ENCODE measurements at regions of chr10 and their contacts with region 1.

Region 1: GRCh38 chr10:109883859-109884771 is 39.2 kb downstream of the XPNPEP1 start:
- ATAC-seq: peak; percentile 89 to 97 (median 94)
- H3K4me3 ChIP-seq: no peak overlapping the region
- H3K27ac ChIP-seq: peak overlapping the region in 1 of 2 donors; percentile 60
- H3K4me1 ChIP-seq: peaks cover 5 to 7% of the 10 kb centered on the region in 2 donors

Region 2: GRCh38 chr10:110007701-110008517 is 123.8 kb after region 1 on chr10 and contains the start of gene ADD3:
- in situ Hi-C with region 1: loop called in 1 of 9 experiments (anchors 10 kb)
- ATAC-seq: peak; percentile 51 to 83 (median 81)
- H3K4me3 ChIP-seq: peak within 1 kb of the TSS; percentile 46 to 92 (median 60)
- H3K27ac ChIP-seq: peak within 1 kb of the TSS; percentile 52 to 87
- H3K4me1 ChIP-seq: peaks cover 19 to 22% of the 10 kb centered on the region in 2 donors
- total RNA-seq, gene ADD3: 18.3 to 251 (median 67.4) TPM

Region 3: GRCh38 chr10:110101464-110102144 is 217.5 kb after region 1 on chr10:
- in situ Hi-C with region 1: loop called in 2 of 9 experiments (anchors 25 kb)
- ATAC-seq: no peak
- H3K4me3 ChIP-seq: no peak overlapping the region
- H3K27ac ChIP-seq: no peak overlapping the region
- H3K4me1 ChIP-seq: peaks cover 0 to 4% of the 10 kb centered on the region in 2 donors

Region 4: GRCh38 chr10:110279407-110279986 is 395.4 kb after region 1 on chr10:
- in situ Hi-C with region 1: loop called in 2 of 9 experiments (anchors 25 kb)
- ATAC-seq: peak in 5 of 8 experiments; percentile 47 to 80 (median 74)
- H3K4me3 ChIP-seq: no peak overlapping the region
- H3K27ac ChIP-seq: no peak overlapping the region
- H3K4me1 ChIP-seq: peaks cover 5 to 14% of the 10 kb centered on the region in 2 donors